ENCODE measurements at regions of chrX and their contacts with region 1.

Region 1: DNA sequence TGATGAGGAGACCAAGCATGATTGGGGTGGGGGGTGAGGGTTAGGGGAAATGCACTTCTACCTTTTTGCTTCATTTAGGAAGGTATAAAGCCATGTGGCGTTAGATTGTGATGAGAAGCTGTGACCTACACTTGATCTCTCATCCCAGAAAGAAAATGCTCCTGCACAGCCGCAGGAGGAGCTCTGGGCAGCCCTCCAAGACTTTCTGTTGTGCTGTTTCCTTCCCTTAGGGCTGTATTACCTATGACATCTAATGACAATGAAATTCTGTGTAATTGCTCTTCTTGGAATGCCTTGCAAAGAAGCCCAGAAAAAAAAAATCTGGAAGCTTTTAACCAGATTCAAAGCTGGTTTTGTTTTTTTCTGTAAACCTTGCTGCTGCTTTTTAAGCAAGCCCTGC is 13.4 kb downstream of the PRPS2 start:
- DNase-seq: peak; percentile 34
- H3K4me3 ChIP-seq: no peak overlapping the region
- H3K27ac ChIP-seq: peak overlapping the region; percentile 37 to 54 (median 52)
- H3K4me1 ChIP-seq: peaks cover 0 to 12% (median 2%) of the 10 kb centered on the region in 4 donors
- H3K27me3 ChIP-seq: no peaks in the 10 kb centered on the region
- CTCF ChIP-seq: no peak
- EP300 ChIP-seq: no peak
- POLR2A ChIP-seq: no peak

Region 2: DNA sequence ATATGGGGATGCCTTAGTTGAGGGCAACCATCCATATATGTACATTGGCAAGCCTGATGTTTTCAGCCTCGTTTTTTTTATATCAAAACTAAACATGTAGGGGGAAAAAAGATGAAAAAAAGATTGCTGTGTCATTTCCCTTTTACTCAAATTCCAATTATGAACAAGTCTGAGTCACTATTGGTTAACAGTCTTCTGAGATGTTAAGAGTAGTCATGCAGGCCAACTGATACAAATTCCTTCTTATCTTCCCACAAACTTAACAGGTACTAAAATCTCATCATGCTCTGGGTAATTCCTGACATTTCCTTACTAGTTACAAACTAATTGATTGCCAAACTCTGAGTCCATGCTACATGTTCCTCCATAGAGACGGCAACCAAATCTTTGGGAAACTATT is 444.3 kb before region 1 on chrX:
- in situ Hi-C with region 1: no loop called
- intact Hi-C with region 1: no loop called
- DNase-seq: no peak
- H3K4me3 ChIP-seq: no peak overlapping the region
- H3K27ac ChIP-seq: no peak overlapping the region
- H3K4me1 ChIP-seq: no peaks in the 10 kb centered on the region
- H3K27me3 ChIP-seq: no peaks in the 10 kb centered on the region
- CTCF ChIP-seq: no peak
- EP300 ChIP-seq: no peak
- POLR2A ChIP-seq: no peak

Region 3: GRCh38 chrX:12791257-12792228 is 13.1 kb before region 1 on chrX and contains the start of gene PRPS2:
- in situ Hi-C with region 1: no loop called
- intact Hi-C with region 1: loop called (anchors 1 kb)
- DNase-seq: peak; percentile 79
- H3K4me3 ChIP-seq: peak within 1 kb of the TSS; percentile 52 to 83 (median 71)
- H3K27ac ChIP-seq: peak within 1 kb of the TSS; percentile 71 to 83 (median 80)
- H3K4me1 ChIP-seq: peaks cover 0 to 5% (median 2%) of the 10 kb centered on the region in 4 donors
- H3K27me3 ChIP-seq: no peaks in the 10 kb centered on the region
- CTCF ChIP-seq: no peak
- EP300 ChIP-seq: no peak
- POLR2A ChIP-seq: peak; percentile 42
- total RNA-seq, gene PRPS2: 24.3 to 67.5 (median 32.5) TPM

Measured in transverse colon (tissue), 4 donors.